Activated T-helper 1 cell treated with anti-CD3 and anti-CD28 coated beads, Interleukin-12 subunit alpha, Interleukin-12 subunit beta, Interleukin-2, Interleukin-4 antibody, amounts not matched to agents 30 ng/mL and 10 ng/mL and 1 ng/mL, durations not matched to agents 14 hours and 24 hours and 36 hours (primary cell): ENCODE measurements at regions of chr3 and their contacts with region 1.

Region 1: DNA sequence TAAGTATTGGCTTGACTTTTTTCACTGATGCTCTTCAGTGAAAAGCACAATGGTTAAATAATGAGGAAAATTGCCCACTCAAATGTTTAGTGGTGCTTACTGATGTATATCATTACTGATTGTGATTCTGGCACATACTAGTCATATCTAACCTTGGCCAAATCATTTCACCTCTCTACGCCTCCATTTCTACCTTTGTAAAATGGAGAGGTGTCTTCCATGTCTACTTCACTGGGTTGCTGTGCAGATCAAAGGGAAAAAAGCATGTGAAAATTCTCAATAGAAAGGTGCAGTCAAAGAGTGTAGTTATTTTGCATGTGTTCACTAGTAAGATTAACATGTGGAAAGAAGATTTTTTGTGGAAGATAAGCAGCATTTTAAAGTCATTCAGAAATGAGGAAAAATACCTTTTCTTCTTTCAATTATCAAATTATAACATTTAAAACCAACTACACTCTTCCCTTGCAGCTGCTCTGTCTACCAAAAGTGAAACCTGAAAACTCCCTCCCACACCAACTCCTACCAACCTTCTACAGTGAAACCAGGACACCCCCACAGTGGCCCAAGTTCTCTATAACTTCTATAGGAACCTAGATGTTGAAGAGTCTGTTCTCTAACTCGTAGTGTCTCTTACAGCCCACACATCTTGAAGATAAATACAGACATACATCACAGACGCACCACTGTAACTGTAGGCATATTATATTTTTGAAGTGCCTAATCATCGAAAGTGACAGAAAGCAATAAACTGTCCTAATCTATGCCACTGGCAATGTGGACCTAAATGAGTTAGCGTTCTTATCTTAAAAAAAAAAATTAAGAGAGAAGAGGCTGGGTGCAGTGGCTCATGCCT is 1.4 kb downstream of the CD200R1 start:
- DNase-seq: peak; percentile 54
- H3K4me3 Mint-ChIP-seq: peak overlapping the region; percentile 89
- H3K27ac Mint-ChIP-seq: peak overlapping the region; percentile 87
- H3K4me1 Mint-ChIP-seq: peaks cover 83% of the 10 kb centered on the region
- H3K27me3 Mint-ChIP-seq: no peaks in the 10 kb centered on the region

Region 2: DNA sequence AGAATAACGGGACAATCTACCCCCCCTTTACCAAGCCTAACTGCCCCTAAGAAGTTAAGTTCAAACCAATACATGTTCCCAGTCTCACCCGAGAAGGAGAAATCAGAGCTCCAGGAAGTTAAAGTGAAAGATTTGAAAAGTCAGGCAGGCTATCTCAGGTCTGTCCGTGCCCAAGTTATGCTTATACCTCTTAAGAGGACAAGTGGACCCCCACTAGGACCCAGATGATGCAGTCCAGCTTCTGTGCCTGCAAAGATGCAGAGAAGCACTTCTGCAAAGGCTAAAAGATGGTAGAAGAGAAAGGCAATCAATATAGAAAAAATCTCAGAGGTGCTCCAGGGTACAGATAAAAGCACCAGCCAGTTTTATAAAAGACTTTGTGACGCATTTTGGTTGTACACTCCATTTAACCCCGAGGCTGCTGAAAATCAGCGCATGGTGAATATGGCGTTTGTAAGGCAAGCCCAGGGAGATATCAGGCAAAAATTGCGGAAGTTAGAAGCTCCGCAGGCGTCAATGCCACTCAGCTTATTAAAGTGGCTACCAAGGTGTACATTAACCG is 669.7 kb before region 1 on chr3:
- intact Hi-C with region 1: loop called (anchors 5 kb)
- DNase-seq: no peak
- H3K4me3 Mint-ChIP-seq: no peak overlapping the region
- H3K27ac Mint-ChIP-seq: no peak overlapping the region
- H3K4me1 Mint-ChIP-seq: peaks cover under 1% of the 10 kb centered on the region
- H3K27me3 Mint-ChIP-seq: no peaks in the 10 kb centered on the region

Region 3: DNA sequence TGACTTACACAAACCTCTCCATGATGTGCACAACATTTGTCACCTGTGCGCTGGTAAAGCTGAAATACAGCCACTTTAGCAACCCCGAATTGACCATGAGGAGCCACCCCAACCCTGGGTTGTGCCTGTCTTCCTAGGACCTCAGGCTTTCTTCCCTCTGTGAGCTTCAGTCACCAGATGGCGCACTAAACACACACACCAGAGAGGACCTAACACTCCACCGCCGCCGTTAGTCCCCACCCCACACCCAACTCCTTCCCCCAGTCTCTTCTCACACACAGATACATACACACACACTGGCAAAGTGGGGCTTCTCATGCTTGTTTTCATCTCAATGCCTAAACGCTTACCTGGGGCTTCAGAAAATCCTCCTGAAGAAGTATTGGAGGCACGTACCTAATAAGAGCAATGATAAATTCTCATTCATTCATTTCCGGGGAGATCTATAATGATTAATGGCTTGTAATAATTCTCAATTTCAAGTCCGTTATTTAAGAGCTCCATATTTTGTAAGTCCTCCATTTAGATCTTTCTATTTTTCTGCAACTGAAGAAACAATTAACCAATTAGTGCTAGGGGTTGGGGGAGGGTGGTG is 330.5 kb before region 1 on chr3:
- intact Hi-C with region 1: loop called (anchors 1 kb)
- DNase-seq: peak; percentile 74
- H3K4me3 Mint-ChIP-seq: peak overlapping the region; percentile 68
- H3K27ac Mint-ChIP-seq: peak overlapping the region; percentile 61
- H3K4me1 Mint-ChIP-seq: peaks cover 27% of the 10 kb centered on the region
- H3K27me3 Mint-ChIP-seq: peaks cover 5% of the 10 kb centered on the region

Region 4: DNA sequence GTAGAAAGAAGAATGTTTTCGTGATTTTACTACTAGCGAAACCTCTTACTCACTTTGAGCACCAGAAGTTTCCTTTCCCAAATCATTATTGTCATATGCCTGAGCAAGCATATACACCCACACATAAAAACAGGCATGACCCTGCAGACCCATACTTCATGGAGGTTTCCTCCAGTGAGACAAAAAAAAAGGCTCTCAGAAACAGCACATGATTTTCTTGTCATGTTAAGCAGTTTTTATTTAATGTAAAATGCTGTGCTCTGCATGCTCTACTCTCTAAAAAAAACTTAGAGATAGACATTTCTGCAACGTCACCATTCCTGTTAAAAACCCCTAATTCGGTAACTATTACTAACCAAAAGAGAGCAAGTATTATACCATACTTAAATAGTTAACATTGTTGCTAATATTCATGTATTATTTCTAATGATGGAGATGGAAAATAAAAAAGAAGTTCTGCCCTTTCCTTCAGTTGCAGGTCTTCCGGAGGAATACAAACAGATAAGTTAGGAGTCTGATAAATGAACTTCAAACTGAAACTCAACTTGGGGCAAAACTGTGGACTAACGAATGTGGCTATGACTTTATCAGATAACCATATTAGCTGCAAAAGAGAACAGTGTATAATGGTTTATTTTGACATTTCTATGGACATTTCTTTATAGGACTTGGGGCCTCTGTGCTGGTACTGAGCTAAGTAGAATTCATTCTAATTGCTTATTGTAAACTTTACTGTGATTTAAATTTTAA is 14.6 kb before region 1 on chr3:
- intact Hi-C with region 1: loop called (anchors 1 kb)
- DNase-seq: no peak
- H3K4me3 Mint-ChIP-seq: peak overlapping the region; percentile 64
- H3K27ac Mint-ChIP-seq: peak overlapping the region; percentile 67
- H3K4me1 Mint-ChIP-seq: peaks cover 32% of the 10 kb centered on the region
- H3K27me3 Mint-ChIP-seq: no peaks in the 10 kb centered on the region

Region 5: DNA sequence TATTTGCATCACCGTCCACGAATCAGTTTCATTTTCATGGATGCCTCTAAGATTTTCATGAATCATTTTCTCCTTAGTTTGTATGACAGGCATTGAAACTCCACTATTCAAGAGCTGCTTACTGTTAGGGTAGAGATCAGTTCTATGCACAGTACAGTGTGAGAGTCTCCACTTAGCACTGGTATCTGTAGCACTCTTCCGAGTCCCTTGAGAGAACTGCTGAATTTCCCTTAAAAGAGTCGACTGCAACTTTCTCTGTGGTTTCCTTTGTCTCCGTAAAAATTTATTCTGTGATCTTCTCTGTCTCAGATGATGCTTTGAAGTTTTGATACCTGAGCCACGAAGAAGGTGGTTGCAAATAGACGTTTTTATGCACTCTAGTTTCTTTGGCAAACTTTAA is 32.1 kb after region 1 on chr3:
- intact Hi-C with region 1: loop called (anchors 1 kb)
- DNase-seq: peak; percentile 24
- H3K4me3 Mint-ChIP-seq: peak overlapping the region; percentile 67
- H3K27ac Mint-ChIP-seq: peak overlapping the region; percentile 91
- H3K4me1 Mint-ChIP-seq: peaks cover 83% of the 10 kb centered on the region
- H3K27me3 Mint-ChIP-seq: no peaks in the 10 kb centered on the region